ENCODE measurements at regions of chr12 and their contacts with region 1.

Region 1: DNA sequence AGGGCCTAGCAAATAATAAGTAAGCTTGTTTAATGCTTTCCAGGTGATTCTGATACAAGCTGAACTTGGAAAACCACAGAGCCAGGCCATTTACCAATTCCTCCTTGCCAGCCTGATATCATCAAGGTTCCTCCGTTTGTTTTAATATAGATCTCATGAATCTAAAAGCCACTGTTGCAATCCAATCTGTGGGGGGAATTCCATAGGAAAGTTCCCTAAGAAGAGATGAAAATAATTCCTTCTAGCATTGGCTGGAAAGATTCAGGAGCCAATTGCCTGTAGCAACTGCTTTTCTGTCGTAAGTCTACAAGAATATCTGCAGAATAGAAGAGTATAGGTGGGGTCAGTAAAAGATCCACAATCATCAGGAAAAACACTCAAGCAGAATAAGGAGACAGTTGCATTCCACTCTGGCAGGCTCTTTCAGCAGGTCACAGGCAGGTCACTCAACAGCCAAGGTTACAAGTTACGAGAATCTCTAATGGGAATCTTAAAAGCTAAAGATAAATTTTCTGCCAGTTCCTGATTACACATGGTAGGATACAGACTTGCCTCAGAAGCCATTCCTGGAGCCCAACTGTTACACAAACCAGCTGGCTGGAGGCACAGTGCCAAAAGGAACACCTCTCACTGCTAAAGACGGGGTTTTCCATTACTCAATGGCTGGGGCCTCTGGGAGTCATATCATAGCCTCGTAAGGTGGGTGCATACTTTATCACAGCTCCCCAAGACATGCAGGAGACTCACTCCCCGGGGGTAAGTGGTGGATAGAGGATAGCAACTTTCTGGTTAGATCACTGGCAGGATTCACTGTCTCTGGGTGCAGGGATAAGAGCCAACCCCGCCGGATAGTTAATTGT is 43.6 kb downstream of the FGD6 start:
- DNase-seq: no peak
- ATAC-seq: no peak
- H3K4me3 ChIP-seq: no peak overlapping the region
- H3K4me3 Mint-ChIP-seq: no peak overlapping the region
- H3K27ac ChIP-seq: no peak overlapping the region
- H3K27ac Mint-ChIP-seq: no peak overlapping the region
- H3K4me1 ChIP-seq: no peaks in the 10 kb centered on the region
- H3K4me1 Mint-ChIP-seq: no peaks in the 10 kb centered on the region
- H3K27me3 ChIP-seq: no peaks in the 10 kb centered on the region
- H3K27me3 Mint-ChIP-seq: no peaks in the 10 kb centered on the region
- CTCF ChIP-seq: no peak

Region 2: DNA sequence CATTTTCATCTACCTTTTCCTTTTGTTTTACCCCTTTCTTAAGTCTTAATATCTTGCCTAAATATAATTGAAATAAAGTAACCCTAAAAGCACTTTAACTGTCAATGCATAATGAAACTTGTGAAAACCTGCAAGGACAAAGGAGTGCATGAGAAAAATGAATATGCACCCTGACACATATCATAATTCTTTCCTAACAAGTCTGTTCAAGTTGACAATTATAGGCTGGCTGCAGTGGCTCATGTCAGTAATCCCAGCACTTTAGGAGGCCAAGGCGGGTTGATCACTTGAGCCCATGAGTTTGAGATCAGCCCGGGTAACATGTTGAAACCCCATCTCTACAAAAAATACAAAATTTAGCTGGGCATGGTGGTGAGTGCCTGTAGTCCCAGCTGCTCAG is 21.8 kb before region 1 on chr12:
- CTCF ChIA-PET with region 1: no interaction called
- POLR2A ChIA-PET with region 1: no interaction called
- intact Hi-C with region 1: loop called in 1 of 2 experiments (anchors 1 kb)
- DNase-seq: no peak
- ATAC-seq: no peak
- H3K4me3 ChIP-seq: no peak overlapping the region
- H3K4me3 Mint-ChIP-seq: no peak overlapping the region
- H3K27ac ChIP-seq: no peak overlapping the region
- H3K27ac Mint-ChIP-seq: no peak overlapping the region
- H3K4me1 ChIP-seq: no peaks in the 10 kb centered on the region
- H3K4me1 Mint-ChIP-seq: no peaks in the 10 kb centered on the region
- H3K27me3 ChIP-seq: no peaks in the 10 kb centered on the region
- H3K27me3 Mint-ChIP-seq: no peaks in the 10 kb centered on the region
- CTCF ChIP-seq: no peak

Region 3: DNA sequence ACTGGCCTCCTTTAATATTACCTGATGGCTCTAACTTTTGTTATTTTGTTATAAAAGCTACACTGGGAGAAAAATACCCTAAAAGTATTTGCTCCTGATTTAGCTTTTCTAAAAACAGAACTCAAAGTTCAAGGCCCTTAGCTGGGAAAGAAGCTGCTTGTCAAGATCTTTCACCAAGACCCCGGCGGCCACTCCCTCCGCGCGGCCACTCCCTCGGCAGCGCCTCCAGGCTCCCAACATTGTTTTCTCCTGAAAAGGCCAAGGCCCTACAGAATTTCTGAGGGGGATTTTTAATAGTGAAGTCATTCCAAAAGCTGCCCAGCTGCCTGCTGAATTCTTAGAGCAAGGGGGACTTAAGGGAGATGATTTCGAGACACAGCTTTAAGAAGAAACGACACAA is 520.5 kb after region 1 on chr12:
- CTCF ChIA-PET with region 1: no interaction called
- POLR2A ChIA-PET with region 1: no interaction called
- intact Hi-C with region 1: no loop called
- DNase-seq: no peak
- ATAC-seq: no peak
- H3K4me3 ChIP-seq: no peak overlapping the region
- H3K4me3 Mint-ChIP-seq: no peak overlapping the region
- H3K27ac ChIP-seq: no peak overlapping the region
- H3K27ac Mint-ChIP-seq: no peak overlapping the region
- H3K4me1 ChIP-seq: no peaks in the 10 kb centered on the region
- H3K4me1 Mint-ChIP-seq: no peaks in the 10 kb centered on the region
- H3K27me3 ChIP-seq: no peaks in the 10 kb centered on the region
- H3K27me3 Mint-ChIP-seq: peaks cover 8% of the 10 kb centered on the region
- CTCF ChIP-seq: no peak